RWPE1 (cell line): ENCODE measurements at regions of chr9 and their contacts with region 1.

Region 1: GRCh38 chr9:10612641-10613398 is at the start of gene PTPRD:
- DNase-seq: peak; percentile 62
- H3K27ac ChIP-seq: no peak within 1 kb of the TSS
- CTCF ChIP-seq: peak; percentile 42

Region 2: DNA sequence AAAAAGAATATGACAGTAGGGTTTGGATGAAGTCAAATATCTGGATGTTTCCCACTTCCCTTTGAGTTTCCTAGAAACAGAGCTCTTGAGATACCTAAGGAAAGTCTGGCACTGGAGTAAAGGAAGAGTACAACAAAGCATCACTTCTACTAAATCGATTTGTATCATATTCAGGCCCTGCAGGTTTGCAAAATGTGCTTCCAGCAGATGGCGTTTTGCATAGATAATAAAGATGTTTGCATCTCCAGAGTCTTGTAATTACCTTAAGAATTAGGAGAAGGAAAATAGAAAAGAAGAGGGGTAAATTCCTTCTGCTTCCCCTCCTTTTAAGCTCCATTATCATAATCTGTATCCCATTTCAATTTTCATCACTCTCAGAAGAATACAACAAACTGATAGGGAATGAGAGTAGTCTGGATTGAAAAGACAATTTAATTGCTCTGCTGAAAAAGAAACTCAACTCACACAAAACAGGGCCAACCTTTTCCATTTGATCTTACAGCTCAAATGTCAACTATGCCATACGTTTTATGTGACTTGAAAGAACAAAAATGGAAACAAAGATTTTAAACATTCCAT is 380.4 kb before region 1 on chr9:
- CTCF ChIA-PET with region 1: no interaction called
- POLR2A ChIA-PET with region 1: no interaction called
- DNase-seq: no peak
- H3K27ac ChIP-seq: no peak overlapping the region
- CTCF ChIP-seq: peak; percentile 34

Region 3: GRCh38 chr9:10566848-10567247 is 46.0 kb before region 1 on chr9:
- CTCF ChIA-PET with region 1: no interaction called
- POLR2A ChIA-PET with region 1: no interaction called
- DNase-seq: no peak
- H3K27ac ChIP-seq: no peak overlapping the region
- CTCF ChIP-seq: no peak

Region 4: GRCh38 chr9:10594482-10594881 is 18.3 kb before region 1 on chr9:
- CTCF ChIA-PET with region 1: interaction called, 12 read pairs
- POLR2A ChIA-PET with region 1: no interaction called
- DNase-seq: no peak
- H3K27ac ChIP-seq: no peak overlapping the region
- CTCF ChIP-seq: no peak